Heart right ventricle (tissue), 16 donors: ENCODE measurements at regions of chr11 and their contacts with region 1.

Region 1: DNA sequence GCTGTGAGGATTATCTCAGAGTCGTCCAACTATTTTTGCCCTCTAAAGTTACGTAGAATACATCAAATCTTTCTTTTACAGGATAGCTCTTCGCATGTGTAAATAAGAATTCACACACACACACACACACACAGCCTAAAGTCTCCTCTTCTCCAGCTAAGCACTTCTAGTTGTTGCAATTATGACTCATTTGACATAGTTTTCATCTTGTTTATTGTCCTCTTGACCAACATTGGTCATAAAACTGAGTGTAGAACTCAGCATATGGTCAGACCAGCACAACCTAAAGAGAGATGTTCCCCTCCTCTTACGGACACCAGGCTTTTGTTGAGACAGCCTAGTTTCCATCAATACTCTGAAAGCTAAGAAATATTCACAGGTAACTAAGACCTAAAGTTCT is 234.2 kb downstream of the BLID start:
- DNase-seq: no peak
- ATAC-seq: no peak
- H3K4me3 ChIP-seq: no peak overlapping the region
- H3K27ac ChIP-seq: no peak overlapping the region
- H3K4me1 ChIP-seq: peaks cover 0 to 16% (median 11%) of the 10 kb centered on the region in 9 donors
- H3K27me3 ChIP-seq: no peaks in the 10 kb centered on the region
- CTCF ChIP-seq: no peak

Region 2: DNA sequence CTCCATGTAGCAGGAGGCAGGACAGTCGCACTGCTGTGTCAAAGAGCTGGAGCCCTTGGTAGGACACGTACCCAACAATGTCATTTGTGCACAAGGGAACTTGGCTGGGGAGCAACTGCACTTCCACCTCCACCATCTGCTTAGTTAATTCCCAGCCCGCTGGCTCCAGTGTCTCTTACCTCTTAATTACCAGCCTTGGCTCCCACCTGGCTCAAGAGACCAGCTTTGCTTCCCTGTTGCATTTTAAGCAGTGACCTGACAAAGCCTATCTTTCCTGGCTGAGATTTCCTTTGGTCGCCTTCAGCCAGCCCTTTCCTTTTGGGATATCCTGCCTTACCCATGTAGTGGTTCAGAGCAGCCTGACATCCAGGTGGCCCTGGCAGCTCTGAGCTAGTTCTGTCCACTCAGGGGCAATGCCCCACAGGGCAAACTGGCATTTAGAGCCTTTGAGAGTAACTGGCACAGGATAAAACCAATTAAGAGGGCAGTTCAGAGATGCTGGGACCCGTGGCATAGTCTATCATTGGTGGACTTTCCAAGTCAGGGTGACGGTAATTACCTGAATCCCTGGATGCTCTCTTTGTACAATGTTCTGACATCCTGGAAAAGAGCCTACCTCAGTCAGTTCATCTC is 216.5 kb before region 1 on chr11:
- intact Hi-C with region 1: loop called in 1 of 10 experiments (anchors 5 kb)
- DNase-seq: no peak
- ATAC-seq: no peak
- H3K4me3 ChIP-seq: no peak overlapping the region
- H3K27ac ChIP-seq: no peak overlapping the region
- H3K4me1 ChIP-seq: peaks cover 0 to 7% (median 0%) of the 10 kb centered on the region in 9 donors
- H3K27me3 ChIP-seq: no peaks in the 10 kb centered on the region
- CTCF ChIP-seq: no peak